Tibial artery (tissue), 4 donors: ENCODE measurements at regions of chr4 and their contacts with region 1.

Region 1: DNA sequence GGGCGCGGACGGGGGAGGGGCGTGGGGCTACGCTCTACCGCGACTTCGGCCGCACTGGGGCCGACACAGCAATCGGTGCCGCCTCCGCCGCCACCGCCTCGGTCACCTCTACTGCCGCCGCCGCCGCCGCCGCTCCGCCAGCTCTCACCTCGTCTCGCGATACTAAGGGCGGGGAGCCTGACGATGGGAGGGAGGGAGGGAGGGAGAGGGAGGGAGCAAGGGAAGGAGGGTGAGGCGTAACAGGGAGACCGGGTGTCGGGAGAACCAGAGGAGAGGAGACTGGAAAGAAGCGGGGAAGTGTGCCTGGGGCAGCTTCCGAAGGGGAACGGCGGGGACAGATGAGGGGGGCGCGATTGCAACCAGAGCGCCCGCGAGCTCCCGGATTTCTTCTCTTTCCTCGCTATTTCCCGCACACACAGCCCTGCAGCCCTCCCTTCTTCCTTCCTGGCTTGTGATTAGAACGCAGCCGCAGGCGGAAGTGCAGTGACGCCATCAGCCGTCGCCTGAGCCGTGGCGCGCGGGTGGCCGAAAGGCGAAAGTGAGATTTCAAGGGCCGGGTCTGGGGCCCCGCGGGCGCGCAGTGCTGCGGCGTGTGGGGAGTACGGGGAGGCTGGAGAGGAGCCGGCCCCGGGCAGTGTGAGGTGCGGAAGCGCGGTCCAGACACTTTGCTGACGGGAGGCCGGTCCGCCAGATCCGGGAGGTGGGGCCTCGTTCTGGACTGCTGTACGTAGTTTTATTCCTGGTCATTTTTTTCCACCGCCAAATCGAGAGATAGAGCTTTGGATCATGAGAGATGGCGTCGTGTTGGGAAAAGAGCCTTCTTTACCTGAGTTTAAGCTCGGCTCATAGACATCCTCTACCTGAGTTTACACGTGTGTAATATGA is at the start of gene ANKRD17:
- DNase-seq: peak; percentile 89 to 95
- H3K4me3 ChIP-seq: peak within 1 kb of the TSS; percentile 95 to 99
- H3K27ac ChIP-seq: peak within 1 kb of the TSS; percentile 95 to 98
- H3K4me1 ChIP-seq: peaks cover 0 to 53% (median 31%) of the 10 kb centered on the region in 4 donors
- H3K27me3 ChIP-seq: no peaks in the 10 kb centered on the region
- CTCF ChIP-seq: peak; percentile 19 to 45

Region 2: GRCh38 chr4:73069338-73070073 is 189.4 kb before region 1 on chr4 and contains the start of gene COX18:
- intact Hi-C with region 1: loop called (anchors 5 kb)
- DNase-seq: peak; percentile 98 to 99
- H3K4me3 ChIP-seq: peak within 1 kb of the TSS; percentile 91 to 93
- H3K27ac ChIP-seq: peak within 1 kb of the TSS; percentile 91 to 94
- H3K4me1 ChIP-seq: peaks cover 0 to 27% (median 7%) of the 10 kb centered on the region in 4 donors
- H3K27me3 ChIP-seq: no peaks in the 10 kb centered on the region
- CTCF ChIP-seq: no peak

Region 3: DNA sequence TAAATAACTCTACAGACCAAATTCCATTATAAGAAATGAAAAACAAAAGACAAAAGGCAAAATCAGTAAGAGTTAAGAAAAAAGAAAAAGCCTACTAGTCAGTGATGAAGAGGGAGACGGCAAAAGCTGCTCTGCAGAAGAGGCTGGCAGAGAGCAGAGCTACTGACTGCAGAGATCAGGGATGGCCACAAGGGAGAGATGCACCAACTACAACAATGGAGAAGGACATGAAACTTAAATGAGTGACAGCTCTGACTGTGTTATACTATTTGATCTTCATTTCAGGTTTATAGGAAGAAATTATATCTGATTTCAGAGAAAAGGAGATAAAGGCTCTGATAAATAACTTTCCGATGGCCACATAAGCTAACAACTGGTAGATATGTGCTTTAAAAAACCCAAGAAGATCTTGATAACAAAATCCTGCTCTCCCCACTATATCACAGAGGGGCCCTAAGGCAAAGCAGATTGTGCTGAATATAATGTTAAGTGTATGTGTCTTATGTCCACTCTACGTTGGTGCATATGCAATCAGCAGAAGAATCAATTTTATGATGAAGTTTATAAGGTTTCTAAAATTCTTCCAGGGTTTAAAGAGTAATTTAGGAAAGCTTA is 131.0 kb before region 1 on chr4:
- intact Hi-C with region 1: loop called (anchors 5 kb)
- DNase-seq: no peak
- H3K4me3 ChIP-seq: no peak overlapping the region
- H3K27ac ChIP-seq: no peak overlapping the region
- H3K4me1 ChIP-seq: no peaks in the 10 kb centered on the region
- H3K27me3 ChIP-seq: no peaks in the 10 kb centered on the region
- CTCF ChIP-seq: peak in 1 of 2 experiments; percentile 23